CD8-positive, alpha-beta memory T cell (primary cell): ENCODE measurements at regions of chr1 and their contacts with region 1.

Region 1: GRCh38 chr1:26500488-26501175 is 28.4 kb downstream of the HMGN2 start:
- DNase-seq: peak; percentile 79 to 91 (median 85)
- H3K4me3 ChIP-seq: peak overlapping the region; percentile 89
- H3K4me3 Mint-ChIP-seq: peak overlapping the region; percentile 74 to 94 (median 86)
- H3K27ac ChIP-seq: peak overlapping the region; percentile 82
- H3K27ac Mint-ChIP-seq: peak overlapping the region; percentile 87 to 97 (median 91)
- H3K4me1 ChIP-seq: peaks cover 17% of the 10 kb centered on the region
- H3K4me1 Mint-ChIP-seq: peaks cover 5 to 20% (median 13%) of the 10 kb centered on the region in 3 donors
- H3K27me3 ChIP-seq: no peaks in the 10 kb centered on the region
- H3K27me3 Mint-ChIP-seq: no peaks in the 10 kb centered on the region

Region 2: GRCh38 chr1:26472901-26473845 is 27.5 kb before region 1 on chr1:
- CTCF ChIA-PET with region 1: interaction called, 15 read pairs
- POLR2A ChIA-PET with region 1: interaction called, 31 read pairs
- DNase-seq: peak; percentile 96 to 97 (median 96)
- H3K4me3 ChIP-seq: peak overlapping the region; percentile 58
- H3K4me3 Mint-ChIP-seq: peak overlapping the region; percentile 86 to 100 (median 89)
- H3K27ac ChIP-seq: peak overlapping the region; percentile 92
- H3K27ac Mint-ChIP-seq: peak overlapping the region; percentile 87 to 99 (median 90)
- H3K4me1 ChIP-seq: peaks cover 34% of the 10 kb centered on the region
- H3K4me1 Mint-ChIP-seq: peaks cover 50 to 61% (median 52%) of the 10 kb centered on the region in 3 donors
- H3K27me3 ChIP-seq: no peaks in the 10 kb centered on the region
- H3K27me3 Mint-ChIP-seq: no peaks in the 10 kb centered on the region

Region 3: GRCh38 chr1:26529655-26530409 is 29.2 kb after region 1 on chr1 and contains the start of gene RPS6KA1:
- CTCF ChIA-PET with region 1: interaction called, 19 read pairs
- POLR2A ChIA-PET with region 1: interaction called, 3 read pairs
- DNase-seq: peak; percentile 53 to 76 (median 62)
- H3K4me3 ChIP-seq: peak within 1 kb of the TSS; percentile 54
- H3K4me3 Mint-ChIP-seq: peak within 1 kb of the TSS; percentile 85 to 92 (median 90)
- H3K27ac ChIP-seq: peak within 1 kb of the TSS; percentile 51
- H3K27ac Mint-ChIP-seq: peak within 1 kb of the TSS in 7 of 8 donors; percentile 62 to 93 (median 88)
- H3K4me1 ChIP-seq: peaks cover 33% of the 10 kb centered on the region
- H3K4me1 Mint-ChIP-seq: peaks cover 25 to 39% (median 28%) of the 10 kb centered on the region in 3 donors
- H3K27me3 ChIP-seq: no peaks in the 10 kb centered on the region
- H3K27me3 Mint-ChIP-seq: peaks cover under 1 to 2% of the 10 kb centered on the region in 2 donors
- total RNA-seq, gene RPS6KA1: 187 to 189 TPM

Region 4: DNA sequence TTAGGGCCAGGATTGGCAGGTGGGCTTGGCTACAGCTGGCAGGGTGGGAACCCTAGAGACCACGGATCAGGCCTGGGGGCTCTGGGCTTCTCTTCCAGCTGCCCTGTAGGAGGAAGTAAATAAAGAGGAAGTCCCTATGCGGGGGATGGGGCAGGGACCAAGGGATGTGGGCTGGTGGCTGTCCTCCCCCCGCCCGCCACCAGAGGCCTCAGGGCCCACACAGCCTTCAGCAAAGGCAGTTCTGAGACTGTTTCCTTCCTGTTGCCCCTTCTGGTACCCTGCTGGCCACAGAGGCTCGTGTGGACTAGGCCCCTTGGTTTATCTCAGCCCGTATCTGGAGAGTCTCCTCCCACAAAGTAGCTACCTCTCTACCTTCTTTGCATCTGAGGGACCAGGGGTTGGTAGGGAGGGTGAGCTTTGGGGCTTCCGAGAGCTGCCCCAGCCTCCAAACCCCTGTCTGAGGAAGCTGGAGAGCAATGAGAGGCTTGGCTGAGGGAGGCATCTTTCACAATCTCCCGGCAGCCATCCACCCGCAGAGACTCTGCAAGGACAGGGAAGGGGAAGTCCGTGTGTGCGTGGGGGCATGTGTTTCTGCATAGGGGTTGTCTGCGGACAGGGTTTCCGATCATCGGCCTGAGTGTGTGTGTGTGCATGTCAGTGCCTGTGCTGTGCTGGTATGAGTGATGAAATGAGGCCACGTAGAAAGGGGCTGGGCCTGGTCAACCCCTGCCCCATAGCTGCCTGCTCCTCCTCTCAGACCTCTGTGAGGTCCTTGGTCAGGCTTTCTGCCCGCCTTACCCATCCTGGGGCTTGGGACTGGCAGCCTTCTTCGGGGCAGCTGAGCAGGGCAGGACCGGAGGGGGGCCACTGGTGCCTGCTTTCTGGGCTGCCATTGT is 41.4 kb after region 1 on chr1:
- CTCF ChIA-PET with region 1: interaction called, 26 read pairs
- POLR2A ChIA-PET with region 1: interaction called, 17 read pairs
- DNase-seq: peak; percentile 57 to 85 (median 73)
- H3K4me3 ChIP-seq: peak overlapping the region; percentile 61
- H3K4me3 Mint-ChIP-seq: peak overlapping the region; percentile 60 to 84 (median 81)
- H3K27ac ChIP-seq: peak overlapping the region; percentile 80
- H3K27ac Mint-ChIP-seq: peak overlapping the region; percentile 94 to 98 (median 97)
- H3K4me1 ChIP-seq: peaks cover 88% of the 10 kb centered on the region
- H3K4me1 Mint-ChIP-seq: peaks cover 79 to 92% (median 87%) of the 10 kb centered on the region in 3 donors
- H3K27me3 ChIP-seq: no peaks in the 10 kb centered on the region
- H3K27me3 Mint-ChIP-seq: peaks cover 0 to 1% of the 10 kb centered on the region in 2 donors

Region 5: GRCh38 chr1:26602378-26602959 is 101.8 kb after region 1 on chr1:
- CTCF ChIA-PET with region 1: interaction called, 14 read pairs
- POLR2A ChIA-PET with region 1: no interaction called
- DNase-seq: peak in 3 of 5 donors; percentile 30 to 61 (median 56)
- H3K4me3 ChIP-seq: no peak overlapping the region
- H3K4me3 Mint-ChIP-seq: no peak overlapping the region
- H3K27ac ChIP-seq: no peak overlapping the region
- H3K27ac Mint-ChIP-seq: no peak overlapping the region
- H3K4me1 ChIP-seq: peaks cover 8% of the 10 kb centered on the region
- H3K4me1 Mint-ChIP-seq: peaks cover 7 to 10% (median 9%) of the 10 kb centered on the region in 3 donors
- H3K27me3 ChIP-seq: no peaks in the 10 kb centered on the region
- H3K27me3 Mint-ChIP-seq: peaks cover 0 to 2% of the 10 kb centered on the region in 2 donors